Activated naive CD4-positive, alpha-beta T cell treated with anti-CD3 and anti-CD28 coated beads for 36 hours (primary cell): ENCODE measurements at regions of chr14 and their contacts with region 1.

Region 1: DNA sequence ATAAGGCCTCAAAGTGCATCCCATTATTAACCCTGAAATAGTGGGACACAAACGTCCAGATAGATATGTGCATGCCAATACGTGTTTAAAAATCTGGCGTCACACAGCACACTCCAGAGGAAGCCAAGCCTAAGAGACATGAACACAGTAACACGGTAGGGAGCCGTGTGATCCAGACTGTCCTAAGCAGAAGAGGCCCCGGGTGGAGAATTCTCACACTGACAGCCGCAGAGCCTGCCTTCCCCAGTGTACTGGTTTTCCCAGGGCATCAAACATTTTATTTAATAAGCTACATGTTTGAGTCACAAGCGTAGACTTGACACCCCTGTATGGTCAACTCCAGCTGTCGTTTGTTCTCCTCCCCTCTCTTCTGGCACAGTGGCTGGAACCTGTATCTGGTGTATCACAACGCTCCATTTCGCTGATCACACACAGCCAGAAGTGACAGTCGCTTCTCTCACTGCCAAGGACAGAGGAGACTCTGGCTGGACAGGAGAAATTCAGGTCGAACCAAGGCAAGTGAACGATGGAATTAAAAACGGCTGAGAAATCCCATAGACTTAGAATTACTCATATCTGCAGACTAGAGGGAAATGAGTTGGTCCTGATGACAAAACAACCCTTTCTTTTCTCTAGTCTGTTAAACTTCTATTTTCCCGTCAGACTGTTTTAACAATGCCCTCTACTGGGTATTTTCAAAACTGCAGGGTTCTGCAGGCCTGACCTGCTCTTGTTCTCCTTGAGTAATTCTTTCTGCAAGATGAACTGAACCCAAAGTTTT is 359.9 kb downstream of the RGS6 start:
- DNase-seq: peak; percentile 16
- H3K4me3 Mint-ChIP-seq: no peak overlapping the region
- H3K27ac Mint-ChIP-seq: no peak overlapping the region
- H3K4me1 Mint-ChIP-seq: no peaks in the 10 kb centered on the region
- H3K27me3 Mint-ChIP-seq: peaks cover 14% of the 10 kb centered on the region

Region 2: DNA sequence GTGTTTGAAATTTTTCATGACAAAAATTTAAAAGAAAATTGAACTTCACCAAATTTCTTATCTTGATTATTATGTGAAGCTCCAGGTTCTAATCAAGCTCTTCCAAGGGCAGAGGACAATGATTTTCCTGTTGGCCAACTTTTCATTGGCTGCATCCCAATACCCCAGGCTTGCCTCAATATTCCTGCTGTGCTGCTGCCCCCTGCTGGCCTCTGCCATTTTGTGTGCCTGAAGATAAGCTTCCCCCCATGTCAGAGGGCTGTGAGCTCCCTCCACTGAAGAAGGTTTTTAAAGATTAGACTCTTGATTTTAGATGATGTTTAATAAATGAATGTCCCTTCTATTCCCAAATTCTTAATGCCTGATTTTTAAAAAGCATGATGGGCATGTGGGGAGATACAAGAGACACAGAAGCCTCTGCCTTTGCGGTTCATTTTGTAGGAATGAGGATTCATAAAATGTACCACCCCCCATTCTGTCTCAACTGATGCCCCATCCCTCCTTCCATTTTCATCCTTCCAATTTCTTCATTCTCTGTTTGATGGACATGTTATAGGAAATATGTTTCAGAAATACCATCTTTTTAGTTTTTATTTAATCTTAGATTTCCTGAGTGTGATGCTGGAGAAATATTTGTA is 436.6 kb before region 1 on chr14:
- CTCF ChIA-PET with region 1: no interaction called
- intact Hi-C with region 1: loop called (anchors 5 kb)
- DNase-seq: peak; percentile 76
- H3K4me3 Mint-ChIP-seq: no peak overlapping the region
- H3K27ac Mint-ChIP-seq: no peak overlapping the region
- H3K4me1 Mint-ChIP-seq: peaks cover 4% of the 10 kb centered on the region
- H3K27me3 Mint-ChIP-seq: peaks cover 48% of the 10 kb centered on the region

Region 3: DNA sequence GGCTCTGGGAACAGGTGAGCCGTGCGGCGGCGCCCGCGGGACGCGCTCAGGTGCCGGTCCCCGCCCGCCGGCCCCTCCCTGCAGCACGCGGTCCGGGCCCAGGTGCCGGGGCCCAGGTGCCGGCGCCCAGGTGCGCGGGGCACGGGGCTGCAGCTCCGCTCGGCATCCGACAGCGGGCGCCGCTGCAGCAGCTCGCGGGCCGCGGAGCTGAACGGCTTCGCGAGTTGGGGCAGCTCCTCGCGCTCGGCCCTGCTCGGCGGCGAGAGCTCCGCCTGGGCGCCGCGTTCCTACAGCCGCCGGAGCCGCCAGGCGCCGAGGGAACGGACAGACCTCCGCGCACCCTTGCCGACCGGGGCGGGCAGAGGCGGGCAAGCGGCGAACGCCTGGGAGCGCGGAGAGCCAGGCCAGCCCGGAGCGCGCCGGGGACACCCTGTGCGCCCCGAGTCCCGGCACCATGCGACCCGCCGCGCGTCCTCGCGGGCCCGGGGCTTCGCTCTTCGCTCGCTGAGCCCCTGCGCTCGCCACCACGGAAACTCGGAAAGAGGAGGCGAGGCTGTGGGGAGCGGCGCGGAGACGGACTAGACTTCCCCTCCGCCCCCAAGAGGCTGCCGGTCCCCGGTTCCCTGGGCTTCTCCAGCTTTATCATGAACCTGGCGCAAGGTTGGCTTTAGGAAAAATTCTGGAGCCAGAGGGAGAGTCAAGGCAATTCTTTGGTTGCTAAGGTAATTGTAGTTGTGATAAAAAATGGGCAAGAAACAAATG is 359.7 kb before region 1 on chr14 and contains the start of gene RGS6:
- CTCF ChIA-PET with region 1: no interaction called
- intact Hi-C with region 1: loop called (anchors 10 kb)
- DNase-seq: peak; percentile 27
- H3K4me3 Mint-ChIP-seq: peak within 1 kb of the TSS; percentile 23
- H3K27ac Mint-ChIP-seq: no peak within 1 kb of the TSS
- H3K4me1 Mint-ChIP-seq: peaks cover 12% of the 10 kb centered on the region
- H3K27me3 Mint-ChIP-seq: peaks cover 43% of the 10 kb centered on the region
- total RNA-seq, gene RGS6: not detected

Region 4: GRCh38 chr14:72023722-72024407 is 268.2 kb before region 1 on chr14:
- CTCF ChIA-PET with region 1: no interaction called
- intact Hi-C with region 1: loop called (anchors 1 kb)
- DNase-seq: peak; percentile 69
- H3K4me3 Mint-ChIP-seq: no peak overlapping the region
- H3K27ac Mint-ChIP-seq: no peak overlapping the region
- H3K4me1 Mint-ChIP-seq: peaks cover 6% of the 10 kb centered on the region
- H3K27me3 Mint-ChIP-seq: peaks cover 12% of the 10 kb centered on the region